GM12878 (cell line): ENCODE measurements at regions of chr1 and their contacts with region 1.

Region 1: DNA sequence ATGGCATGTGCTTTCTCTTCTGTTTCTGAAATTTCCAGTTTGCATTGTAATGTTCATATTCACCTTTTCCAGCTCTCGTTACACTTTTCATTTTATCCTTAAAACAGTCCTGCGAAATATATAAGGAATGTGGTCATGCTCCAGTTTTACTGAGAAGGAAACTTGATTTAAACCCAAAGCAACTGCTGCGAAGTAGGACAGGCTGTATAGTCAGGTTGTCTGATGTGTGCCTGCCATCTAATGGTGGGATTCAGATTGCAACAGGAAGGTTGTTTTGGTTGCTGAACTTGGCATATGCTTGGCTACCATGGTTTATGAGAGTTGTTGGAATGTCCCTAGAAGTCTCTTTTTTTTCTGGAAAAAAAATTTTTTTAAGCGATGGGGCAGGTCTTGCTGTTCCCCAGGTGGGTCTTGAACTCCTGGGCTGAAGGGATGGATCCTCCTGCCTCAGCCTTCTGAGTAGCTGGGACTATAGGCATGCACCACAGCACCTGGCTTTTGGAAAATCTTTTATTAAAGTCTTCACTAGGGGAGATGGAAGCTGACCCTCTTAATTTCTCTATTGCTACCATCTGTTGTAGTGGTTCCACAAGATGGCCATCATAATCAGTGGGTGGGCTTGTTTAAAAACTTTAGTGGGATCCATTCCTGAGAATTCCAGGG is 86.9 kb downstream of the UCK2 start:
- DNase-seq: peak; percentile 54
- ATAC-seq: peak; percentile 95
- H3K4me3 ChIP-seq: no peak overlapping the region
- H3K27ac ChIP-seq: no peak overlapping the region
- H3K4me1 ChIP-seq: no peaks in the 10 kb centered on the region
- H3K27me3 ChIP-seq: no peaks in the 10 kb centered on the region
- CTCF ChIP-seq: peak; percentile 78 to 97 (median 87); a peak in 5 of 6 replicates
- EP300 ChIP-seq: no peak
- POLR2A ChIP-seq: no peak
- RAD21 ChIP-seq: peak; percentile 99

Region 2: GRCh38 chr1:165392634-165393571 is 521.4 kb before region 1 on chr1:
- CTCF ChIA-PET with region 1: interaction called, 5 read pairs
- POLR2A ChIA-PET with region 1: no interaction called
- RAD21 ChIA-PET with region 1: interaction called, 5 read pairs
- SMC1A ChIA-PET with region 1: no interaction called
- in situ Hi-C with region 1: loop called (anchors 5 kb)
- intact Hi-C with region 1: loop called (anchors 5 kb)
- DNase-seq: peak; percentile 64
- ATAC-seq: peak; percentile 99
- H3K4me3 ChIP-seq: no peak overlapping the region
- H3K27ac ChIP-seq: no peak overlapping the region
- H3K4me1 ChIP-seq: peaks cover 9% of the 10 kb centered on the region; the same call in 1 of the 2 replicates
- H3K27me3 ChIP-seq: peaks cover 1 to 3% of the 10 kb centered on the region in 2 experiments; a peak in 2 of 4 replicates
- CTCF ChIP-seq: peak; percentile 95 to 96 (median 95)
- EP300 ChIP-seq: peak in 1 of 2 experiments; percentile 15; a peak in 2 of 4 replicates
- POLR2A ChIP-seq: no peak
- RAD21 ChIP-seq: peak; percentile 88

Region 3: GRCh38 chr1:165717918-165718515 is 196.2 kb before region 1 on chr1:
- CTCF ChIA-PET with region 1: interaction called, 21 read pairs
- POLR2A ChIA-PET with region 1: interaction called, 3 read pairs
- RAD21 ChIA-PET with region 1: interaction called, 6 read pairs
- SMC1A ChIA-PET with region 1: interaction called, 14 read pairs
- in situ Hi-C with region 1: loop called (anchors 5 kb)
- intact Hi-C with region 1: loop called (anchors 1 kb)
- DNase-seq: no peak
- ATAC-seq: peak; percentile 88
- H3K4me3 ChIP-seq: no peak overlapping the region
- H3K27ac ChIP-seq: no peak overlapping the region
- H3K4me1 ChIP-seq: no peaks in the 10 kb centered on the region
- H3K27me3 ChIP-seq: no peaks in the 10 kb centered on the region
- CTCF ChIP-seq: peak; percentile 73 to 84 (median 82)
- EP300 ChIP-seq: no peak
- POLR2A ChIP-seq: no peak
- RAD21 ChIP-seq: peak; percentile 99

Region 4: GRCh38 chr1:165768513-165769394 is 145.5 kb before region 1 on chr1 and contains the start of gene TMCO1:
- CTCF ChIA-PET with region 1: interaction called, 5 read pairs
- POLR2A ChIA-PET with region 1: no interaction called
- RAD21 ChIA-PET with region 1: interaction called, 4 read pairs
- SMC1A ChIA-PET with region 1: interaction called, 13 read pairs
- in situ Hi-C with region 1: no loop called
- intact Hi-C with region 1: loop called (anchors 2 kb)
- DNase-seq: peak; percentile 93
- ATAC-seq: peak; percentile 98
- H3K4me3 ChIP-seq: peak within 1 kb of the TSS; percentile 79
- H3K27ac ChIP-seq: peak within 1 kb of the TSS; percentile 92
- H3K4me1 ChIP-seq: peaks cover 10% of the 10 kb centered on the region; the same call in 1 of the 2 replicates
- H3K27me3 ChIP-seq: no peaks in the 10 kb centered on the region
- CTCF ChIP-seq: peak in 2 of 3 experiments; percentile 15 to 16; a peak in 2 of 6 replicates
- EP300 ChIP-seq: no peak
- POLR2A ChIP-seq: peak; percentile 90
- RAD21 ChIP-seq: peak; percentile 35; the same call in 1 of the 2 replicates
- polyA plus RNA-seq, gene TMCO1: 184 to 253 TPM